ENCODE measurements at regions of chr12 and their contacts with region 1.

Region 1: DNA sequence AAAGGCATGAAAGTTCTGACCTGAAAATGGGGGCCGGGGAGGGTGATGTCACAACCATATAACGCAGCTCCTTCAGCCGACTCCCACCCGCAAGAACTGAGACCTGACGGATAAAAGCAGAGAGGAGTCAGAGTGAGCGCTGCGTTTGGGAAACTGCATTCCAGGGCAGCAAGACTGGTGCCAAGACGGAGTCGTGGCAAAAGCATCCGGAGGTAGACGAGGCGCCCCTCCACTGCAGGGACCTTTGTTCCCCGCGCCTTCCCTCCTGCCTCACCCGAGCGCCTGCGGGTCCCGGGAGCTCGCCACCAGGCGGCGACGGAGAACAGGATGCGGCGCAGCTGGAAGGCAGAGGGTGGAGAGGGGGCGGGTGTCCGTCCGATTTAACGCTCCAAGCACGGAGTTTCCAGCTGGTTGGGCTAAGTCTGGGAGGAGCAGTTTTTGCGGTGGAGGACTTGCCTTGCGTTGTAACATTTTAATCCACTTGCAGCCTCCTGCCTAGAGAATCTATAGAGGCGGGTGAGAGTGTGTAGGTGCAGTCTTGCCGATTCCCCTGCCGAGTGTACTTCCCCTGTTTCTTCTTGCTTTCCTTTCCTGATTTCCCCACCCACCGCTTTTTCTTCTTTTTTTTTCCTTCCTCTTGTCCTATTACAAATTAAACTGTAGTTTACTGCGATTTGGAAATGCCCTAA is 1.2 kb upstream of the CPNE8 start:
- DNase-seq: peak; percentile 66 to 86 (median 73)
- H3K4me3 ChIP-seq: peak overlapping the region; percentile 76 to 98 (median 97)
- H3K4me3 Mint-ChIP-seq: peak overlapping the region; percentile 97 to 98
- H3K27ac ChIP-seq: peak overlapping the region; percentile 100
- H3K27ac Mint-ChIP-seq: peak overlapping the region; percentile 84 to 99 (median 97)
- H3K4me1 ChIP-seq: peaks cover 30 to 35% of the 10 kb centered on the region in 2 donors
- H3K4me1 Mint-ChIP-seq: peaks cover 34% of the 10 kb centered on the region
- H3K27me3 ChIP-seq: no peaks in the 10 kb centered on the region
- H3K27me3 Mint-ChIP-seq: peaks cover 0 to 2% (median 2%) of the 10 kb centered on the region in 3 donors
- CTCF ChIP-seq: peak; percentile 91

Region 2: DNA sequence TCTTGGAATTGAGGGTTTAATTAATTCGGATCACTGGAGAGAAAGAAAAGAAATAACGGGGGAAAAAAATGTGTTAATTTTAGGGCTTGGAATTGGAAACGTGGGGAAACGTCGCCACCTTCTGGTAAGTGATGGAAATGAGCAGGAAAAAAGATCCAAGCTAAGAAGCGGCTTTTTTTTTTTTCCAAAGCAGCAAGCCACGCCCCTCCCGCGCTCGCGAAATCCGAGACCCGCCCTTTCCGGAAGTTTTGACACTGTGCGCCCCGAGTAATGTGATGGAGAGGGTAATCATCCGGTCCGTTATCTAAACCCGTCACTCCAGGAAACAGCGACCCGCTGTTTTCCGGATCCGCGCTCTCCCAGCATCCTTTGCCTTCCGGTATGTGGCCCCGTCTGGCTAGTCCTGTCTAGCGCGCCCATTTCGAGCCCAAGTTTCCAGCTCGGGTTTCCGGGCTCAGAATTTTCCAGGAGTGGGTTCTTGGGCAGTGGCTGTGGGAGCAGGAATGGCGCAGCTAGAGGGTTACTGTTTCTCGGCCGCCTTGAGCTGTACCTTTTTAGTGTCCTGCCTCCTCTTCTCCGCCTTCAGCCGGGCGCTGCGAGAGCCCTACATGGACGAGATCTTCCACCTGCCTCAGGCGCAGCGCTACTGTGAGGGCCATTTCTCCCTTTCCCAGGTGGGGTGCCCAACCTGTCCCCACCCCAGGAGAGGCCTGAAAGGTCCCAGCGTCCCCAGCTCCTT is 590.1 kb before region 1 on chr12 and contains the start of gene ALG10B:
- intact Hi-C with region 1: loop called in 1 of 2 experiments (anchors 5 kb)
- DNase-seq: peak; percentile 93 to 95 (median 95)
- H3K4me3 ChIP-seq: peak within 1 kb of the TSS; percentile 51 to 86 (median 59)
- H3K4me3 Mint-ChIP-seq: peak within 1 kb of the TSS; percentile 94 to 97
- H3K27ac ChIP-seq: peak within 1 kb of the TSS; percentile 82 to 91
- H3K27ac Mint-ChIP-seq: peak within 1 kb of the TSS; percentile 90 to 96 (median 95)
- H3K4me1 ChIP-seq: peaks cover 6% of the 10 kb centered on the region in 2 donors
- H3K4me1 Mint-ChIP-seq: peaks cover 11% of the 10 kb centered on the region
- H3K27me3 ChIP-seq: peaks cover 4% of the 10 kb centered on the region in 2 donors
- H3K27me3 Mint-ChIP-seq: peaks cover 0 to 3% (median 2%) of the 10 kb centered on the region in 3 donors
- CTCF ChIP-seq: peak; percentile 65
- polyA plus RNA-seq, gene ALG10B: 1.2 to 2.2 (median 1.6) TPM

Region 3: DNA sequence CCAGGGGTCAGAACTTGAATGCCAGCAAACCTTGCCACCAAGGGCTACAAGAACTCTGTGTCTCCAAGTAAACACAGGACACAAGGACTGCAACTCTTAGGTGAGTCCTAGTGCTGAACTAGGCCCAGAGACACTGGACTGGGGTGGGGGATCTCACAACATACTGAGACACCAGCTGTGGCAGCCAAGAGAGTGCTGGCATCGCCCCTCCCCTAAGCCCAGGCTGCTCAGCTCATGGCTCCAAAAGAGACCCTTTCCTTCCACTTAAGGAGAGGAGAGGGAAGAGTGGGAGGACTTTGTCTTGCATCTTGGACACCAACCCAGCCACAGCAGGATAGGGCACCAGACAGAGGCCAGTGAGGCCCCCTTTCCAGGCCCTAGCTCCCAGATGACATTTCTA is 335.2 kb before region 1 on chr12:
- intact Hi-C with region 1: loop called in 1 of 2 experiments (anchors 10 kb)
- DNase-seq: no peak
- H3K4me3 ChIP-seq: no peak overlapping the region
- H3K4me3 Mint-ChIP-seq: no peak overlapping the region
- H3K27ac ChIP-seq: no peak overlapping the region
- H3K27ac Mint-ChIP-seq: no peak overlapping the region
- H3K4me1 ChIP-seq: no peaks in the 10 kb centered on the region
- H3K4me1 Mint-ChIP-seq: peaks cover 2% of the 10 kb centered on the region
- H3K27me3 ChIP-seq: no peaks in the 10 kb centered on the region
- H3K27me3 Mint-ChIP-seq: no peaks in the 10 kb centered on the region
- CTCF ChIP-seq: no peak

Measured in CD14-positive monocyte (primary cell).